ENCODE measurements at regions of chr17 and their contacts with region 1.

Region 1: DNA sequence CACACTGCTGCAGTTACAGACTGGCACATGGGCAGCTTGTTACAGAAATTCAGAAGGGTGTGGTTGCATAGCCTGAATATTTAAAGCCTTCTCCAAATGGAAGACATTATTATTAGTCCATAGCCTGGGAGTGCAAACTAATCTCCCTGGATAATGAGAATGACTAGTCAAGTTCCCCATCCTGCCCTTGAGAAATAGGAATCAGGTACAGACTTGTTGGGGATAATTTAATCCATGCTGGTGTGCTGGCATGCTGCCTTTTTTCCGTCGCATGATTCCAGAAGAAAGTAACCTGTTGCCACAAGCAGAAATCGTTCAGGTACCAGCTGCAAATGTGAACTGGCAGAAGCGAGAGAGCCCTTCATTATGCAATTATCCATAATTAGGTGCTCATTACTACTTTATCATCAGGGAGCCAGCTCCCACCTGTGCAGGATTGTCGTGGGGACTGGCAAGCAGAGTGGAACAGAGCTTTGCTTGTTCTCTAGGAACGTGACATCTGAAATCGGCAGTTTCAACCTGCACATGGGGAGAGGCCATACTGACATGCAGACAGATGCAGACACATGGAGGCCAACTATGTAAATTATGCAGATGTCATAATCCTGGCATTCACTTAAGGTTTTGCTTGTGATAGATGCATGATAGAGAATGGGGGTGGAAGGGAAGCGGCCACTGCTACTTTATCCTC is 419.4 kb downstream of the PMP22 start:
- DNase-seq: peak; percentile 94
- H3K4me3 ChIP-seq: peak overlapping the region; percentile 4 to 30 (median 26)
- H3K27ac ChIP-seq: peak overlapping the region; percentile 70
- H3K4me1 ChIP-seq: peaks cover 33% of the 10 kb centered on the region
- H3K27me3 ChIP-seq: no peaks in the 10 kb centered on the region
- CTCF ChIP-seq: no peak

Region 2: GRCh38 chr17:14308965-14309879 is 536.5 kb before region 1 on chr17:
- CTCF ChIA-PET with region 1: no interaction called
- dilution Hi-C with region 1: no loop called
- in situ Hi-C with region 1: no loop called
- intact Hi-C with region 1: loop called (anchors 2 kb)
- DNase-seq: peak; percentile 98
- H3K4me3 ChIP-seq: peak overlapping the region; percentile 58 to 83 (median 61)
- H3K27ac ChIP-seq: peak overlapping the region; percentile 52
- H3K4me1 ChIP-seq: peaks cover 15% of the 10 kb centered on the region
- H3K27me3 ChIP-seq: no peaks in the 10 kb centered on the region
- CTCF ChIP-seq: no peak

Region 3: DNA sequence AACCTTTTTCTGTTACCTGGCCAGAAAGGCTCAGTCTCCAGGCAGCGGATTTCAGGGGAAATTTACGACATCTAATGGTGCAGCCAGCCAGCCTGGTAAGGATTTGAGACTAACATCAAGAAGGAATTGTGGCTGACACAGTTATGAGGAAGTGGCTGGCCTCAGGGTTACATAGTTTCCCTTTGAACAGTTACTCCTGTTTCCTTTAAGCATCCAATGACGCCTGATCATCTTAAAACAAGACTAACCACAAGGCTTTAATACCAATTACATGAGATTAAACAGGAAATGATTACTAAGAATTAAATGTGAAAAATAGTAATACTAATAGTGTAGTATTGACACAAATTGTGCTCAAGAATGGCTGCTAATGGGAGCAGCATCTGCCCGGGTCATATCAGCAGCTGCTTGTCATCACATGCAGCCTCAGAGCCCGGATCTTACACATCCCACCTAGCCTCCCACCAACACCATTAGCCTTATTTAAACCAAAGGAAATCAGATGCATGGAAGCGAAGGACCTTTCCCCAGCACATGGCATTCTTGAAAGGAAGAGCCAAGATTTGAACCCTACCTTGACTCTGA is 12.4 kb before region 1 on chr17:
- CTCF ChIA-PET with region 1: no interaction called
- dilution Hi-C with region 1: no loop called
- in situ Hi-C with region 1: no loop called
- intact Hi-C with region 1: no loop called
- DNase-seq: peak; percentile 54
- H3K4me3 ChIP-seq: no peak overlapping the region
- H3K27ac ChIP-seq: peak overlapping the region; percentile 1
- H3K4me1 ChIP-seq: peaks cover 16% of the 10 kb centered on the region
- H3K27me3 ChIP-seq: no peaks in the 10 kb centered on the region
- CTCF ChIP-seq: no peak

Measured in mammary epithelial cell (primary cell).